GM12878 (cell line): ENCODE measurements at regions of chr9 and their contacts with region 1.

Region 1: DNA sequence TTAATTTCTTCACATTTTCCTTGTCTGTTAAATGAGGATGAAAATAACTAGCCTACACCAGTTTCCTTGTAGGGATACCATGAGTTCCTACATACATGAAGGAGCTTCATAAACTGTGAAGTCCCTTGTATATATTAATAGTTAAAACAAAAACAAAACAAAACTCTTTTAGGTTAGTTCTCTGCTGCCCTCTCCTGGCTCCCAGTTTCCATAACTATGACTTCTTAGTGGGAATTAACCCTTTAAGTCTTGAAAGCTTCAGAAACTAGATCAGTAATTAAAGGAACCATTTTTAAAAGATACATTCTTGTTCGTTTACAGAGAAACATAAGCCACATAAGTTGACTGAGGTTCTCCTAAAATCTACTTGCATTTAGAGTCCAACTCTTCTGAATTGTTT is 500.0 kb upstream of the C9orf72 start:
- DNase-seq: no peak
- ATAC-seq: peak; percentile 44; the same call in 2 of the 3 replicates
- H3K4me3 ChIP-seq: no peak overlapping the region
- H3K27ac ChIP-seq: no peak overlapping the region
- H3K4me1 ChIP-seq: no peaks in the 10 kb centered on the region
- H3K27me3 ChIP-seq: no peaks in the 10 kb centered on the region
- CTCF ChIP-seq: peak; percentile 22 to 50 (median 23); a peak in 3 of 6 replicates
- EP300 ChIP-seq: no peak
- POLR2A ChIP-seq: no peak
- RAD21 ChIP-seq: peak; percentile 57

Region 2: DNA sequence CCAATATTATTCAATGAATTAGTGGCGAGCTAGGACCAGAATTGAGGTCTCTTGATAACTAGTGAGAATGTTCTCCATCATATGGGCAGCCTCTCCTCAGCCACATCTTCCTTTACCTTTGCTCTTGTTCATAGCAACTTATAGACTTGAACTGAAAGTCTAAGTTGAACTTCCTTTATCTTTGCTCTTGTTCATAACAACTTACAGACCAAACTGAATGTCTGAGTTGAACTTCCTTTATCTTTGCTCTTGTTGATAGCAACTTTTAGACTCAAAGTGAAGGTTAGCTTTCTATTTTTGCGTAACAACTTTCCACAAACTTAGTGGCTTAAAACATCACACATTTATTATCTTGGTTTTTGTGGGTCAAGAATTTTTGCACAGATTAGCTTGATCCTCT is 353.6 kb before region 1 on chr9:
- CTCF ChIA-PET with region 1: interaction called, 93 read pairs
- POLR2A ChIA-PET with region 1: interaction called, 5 read pairs
- RAD21 ChIA-PET with region 1: interaction called, 6 read pairs
- SMC1A ChIA-PET with region 1: interaction called, 100 read pairs
- in situ Hi-C with region 1: loop called (anchors 5 kb)
- intact Hi-C with region 1: no loop called
- DNase-seq: no peak
- ATAC-seq: no peak
- H3K4me3 ChIP-seq: no peak overlapping the region
- H3K27ac ChIP-seq: no peak overlapping the region
- H3K4me1 ChIP-seq: no peaks in the 10 kb centered on the region
- H3K27me3 ChIP-seq: no peaks in the 10 kb centered on the region; a peak in 2 of 4 replicates
- CTCF ChIP-seq: no peak
- EP300 ChIP-seq: no peak
- POLR2A ChIP-seq: no peak
- RAD21 ChIP-seq: no peak

Region 3: GRCh38 chr9:27888661-27889295 is 184.5 kb before region 1 on chr9:
- CTCF ChIA-PET with region 1: interaction called, 3 read pairs
- POLR2A ChIA-PET with region 1: no interaction called
- RAD21 ChIA-PET with region 1: interaction called, 3 read pairs
- SMC1A ChIA-PET with region 1: interaction called, 3 read pairs
- in situ Hi-C with region 1: no loop called
- intact Hi-C with region 1: loop called (anchors 10 kb)
- DNase-seq: peak; percentile 4
- ATAC-seq: peak; percentile 92
- H3K4me3 ChIP-seq: no peak overlapping the region
- H3K27ac ChIP-seq: no peak overlapping the region
- H3K4me1 ChIP-seq: no peaks in the 10 kb centered on the region
- H3K27me3 ChIP-seq: no peaks in the 10 kb centered on the region
- CTCF ChIP-seq: peak; percentile 66 to 93 (median 90)
- EP300 ChIP-seq: no peak
- POLR2A ChIP-seq: no peak
- RAD21 ChIP-seq: peak; percentile 56

Region 4: GRCh38 chr9:28014212-28014611 is 59.1 kb before region 1 on chr9:
- CTCF ChIA-PET with region 1: no interaction called
- POLR2A ChIA-PET with region 1: no interaction called
- RAD21 ChIA-PET with region 1: no interaction called
- SMC1A ChIA-PET with region 1: no interaction called
- in situ Hi-C with region 1: no loop called
- intact Hi-C with region 1: loop called (anchors 10 kb)
- DNase-seq: no peak
- ATAC-seq: no peak
- H3K4me3 ChIP-seq: no peak overlapping the region
- H3K27ac ChIP-seq: no peak overlapping the region
- H3K4me1 ChIP-seq: no peaks in the 10 kb centered on the region
- H3K27me3 ChIP-seq: no peaks in the 10 kb centered on the region
- CTCF ChIP-seq: no peak
- EP300 ChIP-seq: no peak
- POLR2A ChIP-seq: no peak
- RAD21 ChIP-seq: no peak

Region 5: DNA sequence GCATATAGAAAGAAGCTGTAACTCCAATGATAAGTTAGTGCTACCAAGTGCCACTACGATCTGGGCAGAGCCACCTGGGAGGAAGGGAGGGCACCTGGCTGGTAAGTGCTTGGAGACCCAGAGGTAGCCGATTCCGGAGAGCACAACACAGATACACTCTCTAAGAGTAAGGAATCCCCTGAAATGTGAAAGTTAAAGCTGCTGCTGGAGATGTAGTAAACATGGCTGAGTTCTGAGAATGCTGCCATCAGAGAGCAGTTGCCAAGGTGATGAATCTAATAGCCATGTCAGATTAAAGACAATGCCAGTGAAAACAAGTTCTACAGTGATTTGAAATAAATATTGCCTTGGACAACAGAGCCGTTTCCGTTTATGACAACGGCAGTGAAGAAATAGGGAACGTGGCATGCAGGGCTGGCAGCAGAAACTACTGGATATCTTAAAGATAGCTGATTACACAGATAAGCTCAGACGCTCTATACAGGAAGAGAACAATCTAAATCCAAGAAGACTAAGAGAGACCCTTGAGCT is 61.2 kb after region 1 on chr9:
- CTCF ChIA-PET with region 1: no interaction called
- POLR2A ChIA-PET with region 1: no interaction called
- RAD21 ChIA-PET with region 1: no interaction called
- SMC1A ChIA-PET with region 1: no interaction called
- in situ Hi-C with region 1: no loop called
- intact Hi-C with region 1: no loop called
- DNase-seq: no peak
- ATAC-seq: no peak
- H3K4me3 ChIP-seq: no peak overlapping the region
- H3K27ac ChIP-seq: no peak overlapping the region
- H3K4me1 ChIP-seq: no peaks in the 10 kb centered on the region
- H3K27me3 ChIP-seq: no peaks in the 10 kb centered on the region
- CTCF ChIP-seq: no peak
- EP300 ChIP-seq: no peak
- POLR2A ChIP-seq: no peak
- RAD21 ChIP-seq: no peak